Endothelial cell of umbilical vein (primary cell): ENCODE measurements at regions of chr4 and their contacts with region 1.

Region 1: GRCh38 chr4:168514249-168514852 is 17.5 kb downstream of the PALLD start:
- DNase-seq: peak; percentile 65
- H3K4me3 ChIP-seq: no peak overlapping the region
- H3K27ac ChIP-seq: no peak overlapping the region
- H3K4me1 ChIP-seq: no peaks in the 10 kb centered on the region
- H3K27me3 ChIP-seq: no peaks in the 10 kb centered on the region
- CTCF ChIP-seq: peak in 1 of 2 donors; percentile 24
- POLR2A ChIP-seq: no peak

Region 2: GRCh38 chr4:168019019-168019651 is 495.2 kb before region 1 on chr4:
- CTCF ChIA-PET with region 1: no interaction called
- POLR2A ChIA-PET with region 1: no interaction called
- dilution Hi-C with region 1: no loop called
- intact Hi-C with region 1: no loop called
- DNase-seq: no peak
- H3K4me3 ChIP-seq: no peak overlapping the region
- H3K27ac ChIP-seq: no peak overlapping the region
- H3K4me1 ChIP-seq: no peaks in the 10 kb centered on the region
- H3K27me3 ChIP-seq: no peaks in the 10 kb centered on the region
- CTCF ChIP-seq: no peak
- POLR2A ChIP-seq: no peak

Region 3: DNA sequence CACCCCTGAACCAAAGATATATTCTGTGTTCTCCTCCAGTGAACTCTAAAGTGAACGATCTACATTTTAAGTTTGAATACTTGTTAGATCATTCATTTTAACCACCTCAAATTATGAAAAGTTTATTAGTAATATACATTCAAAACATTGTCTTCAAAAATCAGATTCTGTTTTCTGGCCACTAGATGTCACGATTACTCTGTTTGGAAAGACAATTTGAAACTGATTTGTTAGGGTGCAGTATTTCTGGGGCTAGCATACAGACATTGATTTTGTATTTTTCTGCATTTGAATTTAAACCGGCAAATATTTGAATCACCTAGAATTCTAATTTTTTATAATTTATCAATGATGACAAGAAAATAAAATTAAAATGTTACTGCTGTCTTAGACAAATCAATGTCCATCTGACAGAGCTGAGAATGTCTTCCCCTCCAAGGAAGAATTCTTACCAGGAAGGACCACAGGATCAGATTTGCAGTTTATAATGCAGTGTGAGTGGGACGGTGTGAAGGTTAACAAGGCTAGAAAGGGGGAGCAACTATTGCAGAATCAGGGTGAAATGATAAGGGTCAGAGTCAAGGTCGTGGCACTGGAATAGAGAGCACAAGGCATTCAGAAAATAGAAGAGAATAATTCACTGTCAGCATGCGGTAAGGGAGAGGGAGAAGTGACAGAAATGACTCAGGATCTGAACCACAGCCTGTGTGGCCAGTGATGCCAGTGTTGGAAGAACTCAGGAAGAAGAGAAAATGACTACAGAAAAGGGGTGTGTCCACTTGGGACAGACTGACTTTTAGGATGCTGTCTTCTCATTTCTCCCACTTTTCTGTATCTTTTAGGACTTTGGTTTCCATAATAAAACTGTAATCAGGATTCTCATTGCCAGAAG is 330.4 kb before region 1 on chr4:
- CTCF ChIA-PET with region 1: interaction called, 4 read pairs
- POLR2A ChIA-PET with region 1: no interaction called
- dilution Hi-C with region 1: no loop called
- intact Hi-C with region 1: loop called (anchors 1 kb)
- DNase-seq: peak; percentile 65
- H3K4me3 ChIP-seq: no peak overlapping the region
- H3K27ac ChIP-seq: no peak overlapping the region
- H3K4me1 ChIP-seq: peaks cover 3% of the 10 kb centered on the region
- H3K27me3 ChIP-seq: no peaks in the 10 kb centered on the region
- CTCF ChIP-seq: peak; percentile 18 to 22
- POLR2A ChIP-seq: no peak

Region 4: DNA sequence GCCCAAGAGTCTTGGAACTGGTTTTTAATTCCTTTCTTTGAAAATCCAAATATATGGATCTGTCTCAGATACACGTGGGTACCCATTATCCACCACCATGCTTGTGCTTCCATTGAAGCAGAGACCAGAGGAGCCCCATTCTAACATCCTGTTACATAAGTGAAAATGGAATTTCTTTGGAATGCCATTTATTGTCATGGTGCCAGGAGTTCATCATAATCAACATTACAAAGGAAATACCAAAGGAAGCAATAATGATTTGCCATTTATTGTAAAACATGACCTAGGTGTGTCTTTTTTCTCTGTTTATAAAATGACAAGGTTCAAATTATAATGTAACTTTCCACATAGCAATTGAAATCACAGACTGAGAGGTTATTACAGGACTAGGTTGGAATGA is 44.2 kb after region 1 on chr4:
- CTCF ChIA-PET with region 1: interaction called, 4 read pairs
- POLR2A ChIA-PET with region 1: no interaction called
- dilution Hi-C with region 1: no loop called
- intact Hi-C with region 1: loop called (anchors 2 kb)
- DNase-seq: peak; percentile 95
- H3K4me3 ChIP-seq: no peak overlapping the region
- H3K27ac ChIP-seq: peak overlapping the region; percentile 69
- H3K4me1 ChIP-seq: peaks cover 47% of the 10 kb centered on the region
- H3K27me3 ChIP-seq: no peaks in the 10 kb centered on the region
- CTCF ChIP-seq: no peak
- POLR2A ChIP-seq: no peak

Region 5: DNA sequence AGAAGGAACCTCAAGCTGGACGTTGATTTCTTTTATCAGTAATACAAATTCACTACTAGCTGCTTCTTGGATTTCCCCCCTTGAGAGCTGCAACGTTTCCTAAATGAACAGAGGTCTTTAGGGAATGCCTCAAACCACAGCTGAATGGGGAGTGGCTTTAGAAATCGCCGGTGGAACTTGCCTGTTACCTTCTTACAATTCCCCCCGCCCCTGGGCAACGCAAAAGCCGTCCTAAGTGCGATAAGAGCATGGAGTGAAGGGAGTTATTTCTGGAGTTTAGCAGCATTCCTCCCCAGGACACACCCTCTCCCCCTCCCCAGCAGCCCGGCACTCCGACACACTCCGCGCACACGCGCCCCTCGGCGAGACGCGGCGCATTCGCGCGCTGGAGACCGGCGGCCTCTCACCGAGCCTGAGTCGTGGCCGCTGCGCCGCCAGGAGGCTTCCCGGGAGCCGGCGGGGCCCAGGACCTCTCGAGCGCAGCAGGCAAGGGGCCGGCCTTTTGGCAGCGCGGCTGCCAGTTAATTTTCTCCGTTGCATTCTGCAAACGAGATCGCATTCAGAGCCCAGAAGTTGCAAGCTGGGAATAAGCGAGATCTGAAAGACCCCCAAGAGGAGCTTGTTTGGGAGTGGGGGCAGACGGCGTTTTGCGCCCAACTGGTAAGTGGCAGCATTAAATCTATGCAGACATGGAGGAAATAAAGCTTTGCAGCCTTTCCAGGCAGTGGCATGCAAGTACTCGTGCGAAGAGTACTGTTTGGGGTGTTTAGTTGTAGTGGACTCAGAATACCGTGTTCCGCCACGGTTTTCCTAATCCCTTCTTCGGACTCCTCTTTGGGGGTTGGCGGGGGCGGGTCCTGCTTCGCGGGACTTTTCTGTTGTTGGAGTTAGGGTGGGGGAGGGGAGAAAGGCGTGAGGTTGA is 117.2 kb after region 1 on chr4:
- CTCF ChIA-PET with region 1: interaction called, 4 read pairs
- POLR2A ChIA-PET with region 1: no interaction called
- dilution Hi-C with region 1: no loop called
- intact Hi-C with region 1: loop called (anchors 1 kb)
- DNase-seq: peak; percentile 72
- H3K4me3 ChIP-seq: peak overlapping the region; percentile 38 to 77 (median 51)
- H3K27ac ChIP-seq: peak overlapping the region; percentile 42
- H3K4me1 ChIP-seq: peaks cover 27% of the 10 kb centered on the region
- H3K27me3 ChIP-seq: no peaks in the 10 kb centered on the region
- CTCF ChIP-seq: peak; percentile 28 to 59
- POLR2A ChIP-seq: no peak

Region 6: DNA sequence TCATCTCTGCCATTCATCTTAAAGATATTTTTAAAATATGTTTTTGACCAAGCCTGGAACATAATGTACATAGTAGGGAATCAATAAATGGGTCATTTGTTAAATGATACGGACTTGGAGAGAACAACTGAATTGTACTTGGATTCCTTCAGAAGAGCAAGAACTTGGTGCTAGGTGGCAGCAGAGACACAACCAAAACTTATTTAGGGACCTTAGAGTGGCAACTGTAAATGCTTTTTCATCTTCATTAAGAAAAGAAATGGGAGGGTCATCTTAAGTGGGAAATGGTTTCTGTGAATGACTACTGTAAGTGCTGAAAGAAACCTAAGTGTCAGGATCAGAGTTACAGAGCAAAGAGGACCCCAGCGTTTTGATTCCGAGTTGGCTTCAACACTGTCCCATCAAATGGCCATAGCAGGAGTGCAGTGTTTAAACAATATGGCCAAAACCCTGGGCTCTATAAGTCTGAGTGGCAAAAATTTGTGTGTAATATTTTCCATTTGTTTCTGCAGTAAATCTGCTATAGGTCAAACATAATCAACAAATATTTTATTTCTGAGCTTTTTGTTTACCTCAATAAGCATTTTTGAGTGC is 196.1 kb after region 1 on chr4:
- CTCF ChIA-PET with region 1: interaction called, 12 read pairs
- POLR2A ChIA-PET with region 1: no interaction called
- dilution Hi-C with region 1: no loop called
- intact Hi-C with region 1: loop called (anchors 5 kb)
- DNase-seq: peak; percentile 82
- H3K4me3 ChIP-seq: no peak overlapping the region
- H3K27ac ChIP-seq: no peak overlapping the region
- H3K4me1 ChIP-seq: peaks cover 12% of the 10 kb centered on the region
- H3K27me3 ChIP-seq: no peaks in the 10 kb centered on the region
- CTCF ChIP-seq: peak; percentile 36 to 48
- POLR2A ChIP-seq: no peak

Region 7: DNA sequence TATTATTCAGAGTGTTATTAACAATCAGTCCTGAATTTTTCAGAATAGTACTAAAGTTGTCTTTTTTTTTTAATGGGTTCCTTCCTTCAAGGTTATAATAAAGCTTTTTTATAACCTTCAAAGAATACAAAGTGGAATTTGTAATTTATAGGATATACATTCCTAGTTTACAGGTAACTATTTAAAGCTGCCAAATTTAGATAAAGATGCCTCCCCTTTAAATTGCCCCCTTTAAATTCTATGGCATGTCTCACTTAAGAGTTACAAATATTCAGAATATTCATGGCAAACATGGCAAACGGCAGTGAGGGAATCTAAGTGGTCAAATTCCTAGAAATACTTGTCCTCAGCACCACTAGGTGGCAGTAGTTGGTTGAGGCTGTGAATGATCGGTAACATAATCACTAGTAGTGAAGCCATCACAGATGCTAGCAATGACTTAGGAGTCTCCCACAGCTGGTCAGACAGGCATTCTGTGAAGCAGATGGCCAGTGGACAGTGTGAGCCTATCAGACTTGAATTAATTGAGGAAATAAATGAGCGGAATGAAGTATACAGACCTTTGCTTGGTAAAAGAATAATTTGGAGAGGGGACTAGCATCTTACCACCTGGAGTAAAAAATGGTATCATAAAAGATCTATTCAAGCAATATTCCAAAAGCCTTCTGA is 409.3 kb after region 1 on chr4:
- CTCF ChIA-PET with region 1: interaction called, 53 read pairs
- POLR2A ChIA-PET with region 1: no interaction called
- dilution Hi-C with region 1: loop called (anchors 25 kb)
- intact Hi-C with region 1: loop called (anchors 1 kb)
- DNase-seq: peak; percentile 67
- H3K4me3 ChIP-seq: no peak overlapping the region
- H3K27ac ChIP-seq: no peak overlapping the region
- H3K4me1 ChIP-seq: no peaks in the 10 kb centered on the region
- H3K27me3 ChIP-seq: no peaks in the 10 kb centered on the region
- CTCF ChIP-seq: peak; percentile 57 to 66
- POLR2A ChIP-seq: no peak